Calu3 (cell line): ENCODE measurements at regions of chr17 and their contacts with region 1.

Region 1: DNA sequence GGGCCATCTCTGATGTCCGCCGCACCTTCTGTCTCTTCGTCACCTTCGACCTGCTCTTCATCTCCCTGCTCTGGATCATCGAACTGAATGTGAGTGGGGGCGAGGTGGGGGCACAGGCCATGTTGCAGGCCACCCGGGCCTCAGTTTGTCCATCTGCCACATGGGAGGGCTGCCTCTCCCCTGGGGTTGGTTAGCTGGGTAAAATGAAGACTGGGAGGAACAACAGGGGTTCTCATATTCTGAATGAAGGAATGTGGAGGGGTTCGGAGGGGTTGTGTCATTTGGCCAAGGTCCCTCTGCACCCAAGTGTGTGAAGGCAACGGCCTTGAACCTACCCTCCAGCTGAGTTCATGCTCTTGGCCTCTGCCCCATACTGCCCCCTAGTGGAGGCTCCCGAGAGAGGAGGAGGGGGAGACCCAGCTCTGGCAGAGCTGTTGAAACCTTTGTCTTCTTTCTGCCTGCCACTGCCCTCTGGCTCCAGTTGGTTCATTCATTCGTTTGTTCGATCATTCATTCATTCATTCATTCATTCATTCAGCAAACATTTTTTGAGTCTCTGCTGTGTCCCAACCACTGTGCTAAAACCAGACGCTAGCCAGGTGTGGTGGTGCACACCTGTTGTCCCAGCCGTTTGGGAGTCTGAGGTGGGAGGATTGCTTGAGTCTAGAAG is 11.4 kb upstream of the TCAP start:
- DNase-seq: peak; percentile 100
- H3K4me3 Mint-ChIP-seq: no peak overlapping the region
- H3K27ac Mint-ChIP-seq: no peak overlapping the region
- H3K4me1 Mint-ChIP-seq: peaks cover 23% of the 10 kb centered on the region
- H3K27me3 Mint-ChIP-seq: no peaks in the 10 kb centered on the region
- CTCF ChIP-seq: no peak

Region 2: GRCh38 chr17:39668199-39668966 is 14.6 kb after region 1 on chr17 and contains the start of gene PNMT:
- CTCF ChIA-PET with region 1: interaction called, 42,089 read pairs
- intact Hi-C with region 1: loop called (anchors 1 kb)
- DNase-seq: peak; percentile 100
- H3K4me3 Mint-ChIP-seq: peak within 1 kb of the TSS; percentile 24
- H3K27ac Mint-ChIP-seq: peak within 1 kb of the TSS; percentile 0
- H3K4me1 Mint-ChIP-seq: peaks cover 65% of the 10 kb centered on the region
- H3K27me3 Mint-ChIP-seq: peaks cover 69% of the 10 kb centered on the region
- CTCF ChIP-seq: no peak
- total RNA-seq, gene PNMT: 1.3 and 3.2 TPM in 2 replicates

Region 3: GRCh38 chr17:39699818-39700147 is 46.0 kb after region 1 on chr17 and contains the start of gene ERBB2:
- CTCF ChIA-PET with region 1: interaction called, 42,089 read pairs
- intact Hi-C with region 1: loop called (anchors 5 kb)
- DNase-seq: peak; percentile 100
- H3K4me3 Mint-ChIP-seq: peak within 1 kb of the TSS; percentile 71
- H3K27ac Mint-ChIP-seq: peak within 1 kb of the TSS; percentile 67
- H3K4me1 Mint-ChIP-seq: peaks cover 68% of the 10 kb centered on the region
- H3K27me3 Mint-ChIP-seq: no peaks in the 10 kb centered on the region
- CTCF ChIP-seq: no peak
- total RNA-seq, gene ERBB2: 4,829 and 4,830 TPM in 2 replicates

Region 4: GRCh38 chr17:39717660-39718059 is 63.9 kb after region 1 on chr17:
- CTCF ChIA-PET with region 1: interaction called, 42,089 read pairs
- intact Hi-C with region 1: loop called (anchors 1 kb)
- DNase-seq: no peak
- H3K4me3 Mint-ChIP-seq: no peak overlapping the region
- H3K27ac Mint-ChIP-seq: peak overlapping the region; percentile 2
- H3K4me1 Mint-ChIP-seq: peaks cover 21% of the 10 kb centered on the region
- H3K27me3 Mint-ChIP-seq: no peaks in the 10 kb centered on the region
- CTCF ChIP-seq: no peak

Region 5: DNA sequence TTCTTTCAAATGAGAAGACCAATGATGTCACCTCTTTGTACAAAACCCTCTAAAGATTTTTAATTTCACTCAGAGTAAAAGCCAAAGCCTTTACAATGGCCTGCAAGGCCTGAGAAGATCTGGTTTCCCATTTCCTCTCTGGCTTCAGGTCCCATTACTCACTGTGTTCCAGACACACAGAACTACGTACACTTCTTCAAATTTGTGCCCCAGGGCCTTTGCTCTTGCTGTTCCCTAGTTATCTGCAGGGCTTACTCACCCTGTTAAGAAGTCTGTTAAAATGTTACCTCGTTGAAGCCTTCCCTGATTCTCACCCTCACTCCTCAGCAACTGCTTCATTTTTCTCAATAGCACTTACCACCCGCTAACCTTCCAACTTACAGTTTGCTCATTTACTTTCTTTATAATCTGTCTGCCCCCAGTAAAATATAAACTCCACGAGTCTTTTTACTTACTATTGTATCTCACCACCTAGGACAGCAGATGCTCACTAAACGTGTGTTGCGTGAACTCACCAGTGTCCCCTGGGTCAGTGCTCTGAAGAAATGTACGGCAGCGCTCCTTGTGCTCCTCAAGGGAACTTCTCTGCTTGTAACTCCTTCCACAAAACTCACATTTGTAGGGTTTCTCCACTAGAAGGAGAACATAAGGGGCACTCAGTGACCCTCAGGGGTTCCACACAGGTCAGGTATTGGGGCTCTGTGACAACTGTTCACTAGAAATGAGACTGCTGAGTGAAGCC is 134.1 kb after region 1 on chr17:
- CTCF ChIA-PET with region 1: interaction called, 254 read pairs
- intact Hi-C with region 1: no loop called
- DNase-seq: peak; percentile 80
- H3K4me3 Mint-ChIP-seq: no peak overlapping the region
- H3K27ac Mint-ChIP-seq: no peak overlapping the region
- H3K4me1 Mint-ChIP-seq: peaks cover 29% of the 10 kb centered on the region
- H3K27me3 Mint-ChIP-seq: no peaks in the 10 kb centered on the region
- CTCF ChIP-seq: no peak